Transverse colon (tissue), 4 donors: ENCODE measurements at regions of chr18 and their contacts with region 1.

Region 1: DNA sequence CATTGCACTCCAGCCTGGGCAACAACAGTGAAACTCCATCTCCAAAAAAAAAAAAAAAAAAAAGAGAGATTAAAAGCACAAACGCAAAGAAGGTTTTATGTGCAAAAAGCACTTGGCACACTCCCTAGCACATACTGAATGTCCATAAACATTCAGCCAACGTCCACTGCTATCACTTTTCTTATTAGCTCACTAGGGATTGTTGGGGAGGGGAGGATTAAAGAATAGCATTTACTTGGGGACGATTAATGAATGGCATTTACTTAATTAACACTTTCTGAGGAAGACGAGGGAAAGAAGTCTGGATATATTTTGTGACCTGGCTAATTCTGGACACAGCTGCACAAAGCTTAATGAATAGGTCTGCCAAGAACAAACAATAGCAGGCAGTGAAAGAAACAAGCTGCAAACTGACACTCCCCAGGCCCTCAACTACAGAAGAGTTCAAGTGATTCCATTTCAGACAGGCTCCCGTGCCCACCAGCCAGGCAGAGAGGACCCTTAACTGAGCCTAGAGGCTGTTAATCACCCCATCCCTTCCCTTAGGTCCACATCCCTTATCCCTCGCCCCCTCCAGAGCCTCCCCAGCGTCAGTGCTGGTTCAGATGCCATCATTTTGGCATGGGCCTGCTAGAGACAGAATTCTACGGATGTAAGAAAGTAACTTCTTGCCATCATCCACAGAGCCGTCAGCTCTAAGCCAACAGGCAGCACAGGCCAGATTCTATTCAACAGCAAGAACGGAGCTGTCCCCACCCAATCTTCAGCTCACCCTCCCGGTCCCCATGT is 7.4 kb downstream of the CYB5A start:
- DNase-seq: no peak
- H3K4me3 ChIP-seq: no peak overlapping the region
- H3K27ac ChIP-seq: peak overlapping the region; percentile 71 to 91 (median 78)
- H3K4me1 ChIP-seq: peaks cover 27 to 56% (median 44%) of the 10 kb centered on the region in 4 donors
- H3K27me3 ChIP-seq: no peaks in the 10 kb centered on the region
- CTCF ChIP-seq: no peak
- EP300 ChIP-seq: no peak
- POLR2A ChIP-seq: no peak

Region 2: DNA sequence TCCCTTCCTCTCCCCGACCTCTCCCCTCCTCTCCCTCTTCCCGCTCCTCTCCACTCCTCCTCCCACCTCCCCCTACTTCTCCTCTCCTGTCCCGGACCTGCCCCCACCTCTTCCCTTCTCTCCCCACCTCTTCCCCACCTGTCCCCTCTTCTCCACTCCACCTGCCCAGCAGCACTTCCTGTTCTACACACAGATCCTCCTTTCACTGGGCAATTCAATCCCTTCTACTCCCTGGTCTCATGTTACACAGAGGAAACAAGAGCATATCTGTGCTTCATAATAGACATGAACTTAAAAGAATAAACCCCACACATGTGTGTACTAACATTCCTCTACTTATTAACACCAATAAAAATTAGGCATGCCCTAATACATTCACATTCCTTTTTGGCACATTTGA is 101.3 kb before region 1 on chr18:
- in situ Hi-C with region 1: no loop called
- intact Hi-C with region 1: no loop called
- DNase-seq: no peak
- H3K4me3 ChIP-seq: no peak overlapping the region
- H3K27ac ChIP-seq: no peak overlapping the region
- H3K4me1 ChIP-seq: no peaks in the 10 kb centered on the region
- H3K27me3 ChIP-seq: no peaks in the 10 kb centered on the region
- CTCF ChIP-seq: no peak
- EP300 ChIP-seq: no peak
- POLR2A ChIP-seq: no peak

Region 3: DNA sequence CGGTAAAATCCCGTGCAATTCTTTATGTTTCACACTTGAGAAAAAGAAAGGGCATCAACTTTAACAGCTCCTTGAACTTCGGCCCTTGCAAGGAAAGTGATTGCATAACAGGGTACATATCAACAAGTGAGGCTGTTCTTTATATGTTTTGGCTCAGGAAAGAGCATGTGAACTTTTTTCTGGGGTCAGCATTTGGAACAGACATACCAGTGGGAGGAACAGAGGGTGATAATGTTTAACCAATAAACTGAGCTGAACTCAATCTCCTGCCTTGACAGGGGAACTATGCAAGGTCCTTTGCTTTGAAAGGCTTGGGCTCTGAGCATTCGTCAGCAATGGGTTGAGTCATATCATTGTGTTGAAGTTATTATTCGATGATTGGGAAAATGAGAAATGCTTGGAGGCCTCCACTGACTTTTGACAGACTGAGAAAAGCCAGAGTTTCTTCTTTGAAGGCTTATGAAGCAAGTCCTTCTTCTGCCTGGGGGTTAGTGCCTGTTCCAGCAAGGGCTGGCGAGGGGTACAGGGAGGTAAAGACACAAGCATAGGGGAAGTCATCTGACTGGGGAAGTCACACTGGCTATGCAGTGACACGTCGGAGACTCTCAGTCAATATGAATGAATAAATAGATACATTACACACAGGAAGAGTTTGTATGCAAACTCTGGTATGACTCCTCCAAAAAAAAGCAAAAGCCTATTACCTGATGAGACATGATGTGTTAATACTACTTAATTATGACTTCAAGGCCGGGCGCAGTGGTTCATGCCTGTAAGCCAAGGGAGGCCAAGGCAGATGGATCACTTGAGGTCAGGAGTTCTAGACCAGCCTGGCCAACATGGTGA is 49.8 kb before region 1 on chr18:
- in situ Hi-C with region 1: no loop called
- intact Hi-C with region 1: loop called (anchors 2 kb)
- DNase-seq: peak; percentile 50
- H3K4me3 ChIP-seq: no peak overlapping the region
- H3K27ac ChIP-seq: peak overlapping the region; percentile 75 to 90 (median 88)
- H3K4me1 ChIP-seq: peaks cover 11 to 34% (median 18%) of the 10 kb centered on the region in 4 donors
- H3K27me3 ChIP-seq: no peaks in the 10 kb centered on the region
- CTCF ChIP-seq: no peak
- EP300 ChIP-seq: peak; percentile 85
- POLR2A ChIP-seq: no peak